Breast epithelium (tissue), 4 donors: ENCODE measurements at regions of chr2 and their contacts with region 1.

Region 1: DNA sequence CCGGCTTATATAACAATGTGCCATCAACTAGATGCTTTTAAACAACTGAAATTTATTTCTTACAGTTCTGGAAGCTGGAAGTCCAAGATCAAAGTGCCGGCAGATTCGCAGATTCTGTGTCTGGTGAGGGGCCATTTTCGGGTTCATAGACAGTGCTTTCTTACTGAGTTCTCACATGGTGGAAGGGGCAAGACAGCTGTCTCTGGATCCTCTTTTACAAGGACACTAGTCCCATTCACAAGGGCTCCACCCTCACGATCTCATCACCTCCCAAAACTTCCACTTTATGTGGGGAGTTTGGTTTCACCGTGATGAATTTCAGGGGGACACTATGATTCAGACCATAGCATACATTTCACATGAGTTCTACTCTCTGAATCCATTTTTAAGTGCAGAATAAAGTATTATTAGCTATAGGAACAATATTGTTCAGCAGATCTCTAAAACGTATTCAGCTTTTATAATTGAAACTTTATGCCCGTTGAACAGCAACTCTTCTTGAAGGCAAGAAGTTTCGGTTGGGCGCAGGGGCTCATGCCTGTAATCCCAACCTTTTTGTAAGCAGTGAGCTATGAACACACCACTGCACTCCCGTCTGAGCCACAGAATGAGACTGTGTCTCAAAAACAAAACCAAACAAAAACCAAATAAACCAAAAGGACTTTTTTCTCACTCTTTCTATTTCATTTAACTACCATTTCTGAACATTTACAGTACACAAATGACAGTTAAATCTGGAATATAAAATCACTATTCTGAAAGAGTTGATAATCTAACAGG is 502.8 kb downstream of the CMPK2 start:
- DNase-seq: no peak
- H3K4me3 ChIP-seq: no peak overlapping the region
- H3K27ac ChIP-seq: no peak overlapping the region
- H3K4me1 ChIP-seq: no peaks in the 10 kb centered on the region
- H3K27me3 ChIP-seq: no peaks in the 10 kb centered on the region
- CTCF ChIP-seq: no peak
- POLR2A ChIP-seq: no peak

Region 2: DNA sequence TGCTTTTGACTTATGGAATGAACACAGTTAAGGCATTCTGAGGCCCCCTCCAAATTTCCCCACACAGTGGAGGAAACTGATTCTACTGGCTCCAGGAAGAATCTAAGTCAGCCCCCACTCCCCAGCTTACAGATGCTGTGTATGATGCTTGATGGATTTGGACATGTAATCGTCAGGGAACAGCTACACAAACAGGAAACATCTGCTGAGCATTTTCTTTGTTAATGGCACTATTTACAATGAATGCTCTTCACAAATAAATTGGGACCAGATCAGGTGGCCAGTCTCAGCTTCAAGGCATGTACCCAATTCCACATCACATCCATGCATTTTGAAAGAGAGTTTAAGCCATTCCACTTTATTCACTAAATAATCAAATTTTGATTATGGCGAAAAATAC is 108.4 kb before region 1 on chr2:
- intact Hi-C with region 1: no loop called
- DNase-seq: no peak
- H3K4me3 ChIP-seq: no peak overlapping the region
- H3K27ac ChIP-seq: no peak overlapping the region
- H3K4me1 ChIP-seq: no peaks in the 10 kb centered on the region
- H3K27me3 ChIP-seq: no peaks in the 10 kb centered on the region
- CTCF ChIP-seq: no peak
- POLR2A ChIP-seq: no peak

Region 3: GRCh38 chr2:6342273-6342920 is 20.5 kb before region 1 on chr2:
- intact Hi-C with region 1: loop called (anchors 1 kb)
- DNase-seq: no peak
- H3K4me3 ChIP-seq: no peak overlapping the region
- H3K27ac ChIP-seq: no peak overlapping the region
- H3K4me1 ChIP-seq: no peaks in the 10 kb centered on the region
- H3K27me3 ChIP-seq: no peaks in the 10 kb centered on the region
- CTCF ChIP-seq: no peak
- POLR2A ChIP-seq: no peak